Motor neuron (in vitro differentiated cells): ENCODE measurements at regions of chr11 and their contacts with region 1.

Region 1: DNA sequence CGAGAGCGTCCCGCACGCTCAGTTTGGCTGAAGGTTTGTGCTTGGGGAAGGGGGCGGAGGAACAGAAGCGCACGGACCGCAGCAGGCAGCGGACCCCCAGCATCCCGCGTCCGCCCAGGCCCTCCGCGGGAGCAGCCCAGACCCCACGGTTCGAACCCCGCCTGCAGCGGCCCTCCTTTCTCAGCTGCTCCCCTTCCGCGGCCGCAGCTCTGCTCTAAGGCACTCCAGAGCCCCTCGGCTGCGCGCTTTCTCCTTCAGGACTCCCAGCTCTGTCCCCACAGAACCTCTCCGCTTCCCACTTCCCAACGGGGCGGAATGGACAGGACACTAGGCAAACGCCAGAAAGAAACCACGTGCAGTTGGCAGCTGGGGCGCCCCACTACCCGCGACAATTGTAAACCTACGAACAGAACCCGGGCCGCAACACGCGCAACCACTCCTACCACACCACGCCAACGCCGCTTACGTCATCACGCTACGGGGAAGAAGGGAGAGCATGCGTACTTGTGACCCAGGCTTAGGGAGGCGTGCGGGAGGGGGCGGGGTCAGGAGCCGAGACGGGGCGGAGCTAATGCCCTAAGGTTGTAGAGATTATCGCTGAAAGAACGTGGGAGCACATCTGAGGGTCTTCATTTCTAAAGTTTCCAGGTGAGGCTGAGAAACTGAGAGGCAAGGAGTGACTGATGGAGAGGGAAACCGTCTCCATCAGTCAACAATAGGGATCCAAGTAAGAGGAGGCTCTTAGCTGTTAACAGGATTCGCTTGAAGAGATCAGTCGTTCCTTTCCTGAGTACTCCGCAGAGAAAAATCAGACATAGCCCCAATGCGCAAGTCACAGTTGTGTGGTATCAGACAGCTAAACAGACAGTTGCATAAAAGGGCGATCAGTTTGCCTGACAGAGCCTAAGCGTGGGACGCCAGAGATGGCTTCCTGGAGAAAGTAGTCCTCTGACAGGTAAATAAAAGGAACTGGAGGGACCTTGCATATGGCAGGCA is at the start of gene NARS2:
- ATAC-seq: peak; percentile 93 to 97 (median 96)
- H3K4me3 ChIP-seq: peak within 1 kb of the TSS; percentile 51 to 87 (median 80)
- H3K27ac ChIP-seq: peak within 1 kb of the TSS; percentile 76 to 84
- H3K4me1 ChIP-seq: peaks cover 0 to 6% of the 10 kb centered on the region in 2 donors
- total RNA-seq, gene NARS2: 11.5 to 36.0 (median 28.1) TPM

Region 2: DNA sequence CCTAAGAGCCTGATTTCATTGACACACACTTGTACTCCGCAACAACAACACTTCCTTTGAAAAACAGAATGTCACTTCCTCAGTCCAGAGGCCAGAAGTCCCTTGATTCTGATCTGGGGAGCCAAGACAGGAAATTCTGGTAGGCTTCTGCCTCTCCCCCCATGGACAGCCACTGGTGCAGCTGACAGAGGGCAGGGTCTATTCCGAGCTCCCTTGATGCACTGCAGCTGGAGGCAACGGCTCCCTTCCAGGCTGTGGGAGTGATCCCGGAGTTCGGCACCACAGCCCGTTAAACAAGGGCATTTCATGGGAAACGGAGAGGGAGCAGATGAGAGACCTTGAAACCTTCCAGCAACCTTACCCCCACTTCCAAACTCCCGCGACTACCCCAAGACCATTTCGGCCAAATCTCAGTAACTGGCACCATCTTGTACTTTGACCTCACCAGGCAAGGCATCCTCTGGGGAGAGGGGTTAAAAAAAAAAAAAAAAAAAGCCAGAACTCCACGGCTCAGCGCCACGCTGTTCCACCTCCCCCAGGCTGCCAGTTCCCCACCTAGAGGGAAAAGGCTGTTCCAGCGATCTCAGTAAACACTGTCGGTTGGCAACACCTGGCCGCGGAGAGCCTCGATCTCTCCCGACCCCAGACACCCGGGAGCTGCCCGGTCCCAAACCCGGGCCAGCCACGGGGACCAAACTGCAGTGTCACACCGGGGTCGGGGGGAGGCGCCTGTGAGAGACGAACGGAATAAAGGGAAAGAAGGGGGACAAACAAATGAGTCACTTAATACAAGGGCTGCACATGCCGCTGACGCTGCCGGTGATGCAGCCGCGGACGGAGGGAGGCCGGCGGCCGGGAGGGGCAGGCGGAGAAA is 158.1 kb before region 1 on chr11:
- in situ Hi-C with region 1: loop called in 1 of 9 experiments (anchors 25 kb)
- ATAC-seq: peak; percentile 54 to 64 (median 58)
- H3K4me3 ChIP-seq: peak overlapping the region; percentile 84 to 92 (median 88)
- H3K27ac ChIP-seq: peak overlapping the region; percentile 87 to 88
- H3K4me1 ChIP-seq: peaks cover 9 to 25% of the 10 kb centered on the region in 2 donors

Region 3: GRCh38 chr11:78432058-78432515 is 142.6 kb before region 1 on chr11:
- in situ Hi-C with region 1: loop called in 2 of 9 experiments (anchors 25 kb)
- ATAC-seq: peak in 5 of 8 experiments; percentile 26 to 48 (median 32)
- H3K4me3 ChIP-seq: no peak overlapping the region
- H3K27ac ChIP-seq: no peak overlapping the region
- H3K4me1 ChIP-seq: no peaks in the 10 kb centered on the region

Region 4: DNA sequence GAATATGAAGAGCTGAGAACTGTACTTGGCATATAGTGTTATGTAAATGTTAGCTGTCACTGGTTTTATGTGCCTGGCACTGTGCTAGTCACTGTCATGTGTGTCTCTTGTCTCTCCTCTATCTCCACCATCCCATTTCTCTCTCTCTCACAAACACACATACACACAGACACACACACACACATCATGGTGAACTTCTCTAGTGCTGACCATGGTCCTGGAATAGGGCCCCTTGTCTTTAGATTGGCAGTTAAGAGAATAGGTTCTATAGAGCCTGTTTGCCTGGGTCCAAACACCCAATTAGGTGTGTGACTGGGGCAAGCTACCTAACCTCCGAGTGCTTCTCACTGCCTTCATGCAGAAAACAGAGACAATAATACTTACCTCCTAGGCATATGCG is 109.7 kb after region 1 on chr11:
- in situ Hi-C with region 1: no loop called
- ATAC-seq: no peak
- H3K4me3 ChIP-seq: no peak overlapping the region
- H3K27ac ChIP-seq: no peak overlapping the region
- H3K4me1 ChIP-seq: no peaks in the 10 kb centered on the region

Region 5: DNA sequence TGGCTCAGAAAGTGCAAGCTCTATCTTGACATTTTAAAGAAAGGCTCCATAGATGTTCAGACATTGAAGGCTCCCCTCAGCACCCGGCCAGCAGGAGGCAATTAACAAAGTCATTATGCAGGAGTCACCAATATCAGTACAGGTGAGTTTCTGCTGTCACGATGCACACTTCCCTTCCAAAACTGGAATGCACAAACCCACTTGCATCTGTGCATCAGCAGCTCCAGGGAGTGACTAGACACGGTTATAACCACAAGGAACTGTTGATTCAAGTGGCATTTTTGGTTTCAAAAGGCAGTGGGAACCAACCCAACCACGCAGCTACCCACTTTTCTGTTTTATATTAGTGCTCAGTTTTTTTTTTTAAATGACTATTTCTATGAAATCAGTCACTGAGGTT is 293.9 kb after region 1 on chr11:
- in situ Hi-C with region 1: no loop called
- ATAC-seq: no peak
- H3K4me3 ChIP-seq: no peak overlapping the region
- H3K27ac ChIP-seq: no peak overlapping the region
- H3K4me1 ChIP-seq: peaks cover 0 to 11% of the 10 kb centered on the region in 2 donors